Colonic mucosa (tissue), 4 donors: ENCODE measurements at regions of chr14 and their contacts with region 1.

Region 1: DNA sequence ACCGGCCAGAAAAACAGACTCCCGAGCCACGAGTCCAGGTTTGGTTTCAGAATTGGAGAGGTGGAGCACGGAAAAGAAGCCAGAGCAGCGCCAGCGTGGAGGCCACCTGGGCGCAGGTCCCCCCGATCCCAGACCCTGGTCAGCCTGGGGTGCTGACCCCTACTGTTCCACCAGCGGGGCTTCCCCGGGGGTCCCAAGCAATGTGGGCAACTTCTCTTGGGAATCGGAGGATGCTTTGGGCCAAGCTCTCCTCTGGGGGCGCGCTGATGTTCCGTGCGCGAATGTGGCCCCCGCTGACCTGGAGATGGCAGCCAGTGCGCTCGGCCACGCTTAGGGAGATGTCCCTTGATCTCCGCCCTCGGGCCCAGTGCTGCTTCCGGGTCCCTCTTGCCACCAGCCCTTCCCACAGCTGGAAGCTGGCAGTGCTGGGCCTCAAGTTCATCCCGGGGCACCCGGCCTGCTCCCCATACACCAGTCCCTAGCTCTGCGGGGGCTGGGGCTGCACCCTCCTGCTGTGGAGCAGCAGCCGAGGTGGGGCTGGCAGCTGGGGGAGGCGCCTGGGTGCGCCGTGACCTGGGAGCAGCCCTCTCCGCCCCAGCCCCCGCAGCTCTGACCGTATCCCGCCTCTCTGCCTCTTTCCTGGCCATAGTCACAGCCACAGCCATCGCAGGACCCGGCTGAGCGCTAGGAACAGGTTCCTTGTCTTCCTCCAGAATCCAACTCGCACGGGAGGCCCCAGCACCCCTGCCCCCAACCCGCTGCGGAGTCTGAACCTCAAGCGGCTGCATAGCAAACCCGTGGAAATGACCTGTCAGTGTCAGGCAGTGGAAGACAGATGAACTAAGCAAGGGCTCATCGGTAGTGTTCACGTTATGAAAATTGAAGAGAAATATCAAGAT is 91.2 kb downstream of the RCOR1 start:
- DNase-seq: peak; percentile 64
- H3K4me3 ChIP-seq: no peak overlapping the region
- H3K27ac ChIP-seq: peak overlapping the region; percentile 83
- H3K4me1 ChIP-seq: peaks cover 9% of the 10 kb centered on the region
- H3K27me3 ChIP-seq: no peaks in the 10 kb centered on the region
- CTCF ChIP-seq: no peak

Region 2: GRCh38 chr14:102187058-102187457 is 496.6 kb before region 1 on chr14:
- intact Hi-C with region 1: no loop called
- DNase-seq: no peak
- H3K4me3 ChIP-seq: no peak overlapping the region
- H3K27ac ChIP-seq: no peak overlapping the region
- H3K4me1 ChIP-seq: no peaks in the 10 kb centered on the region
- H3K27me3 ChIP-seq: no peaks in the 10 kb centered on the region
- CTCF ChIP-seq: no peak

Region 3: GRCh38 chr14:102524466-102525218 is 159.0 kb before region 1 on chr14:
- intact Hi-C with region 1: loop called (anchors 10 kb)
- DNase-seq: peak; percentile 100
- H3K4me3 ChIP-seq: peak overlapping the region; percentile 33
- H3K27ac ChIP-seq: peak overlapping the region; percentile 85
- H3K4me1 ChIP-seq: peaks cover 13% of the 10 kb centered on the region
- H3K27me3 ChIP-seq: no peaks in the 10 kb centered on the region
- CTCF ChIP-seq: peak; percentile 99